ENCODE measurements at regions of chr17 and their contacts with region 1.

Region 1: GRCh38 chr17:80575057-80575875 is 30.6 kb downstream of the RPTOR start:
- DNase-seq: no peak
- H3K4me3 ChIP-seq: no peak overlapping the region
- H3K27ac ChIP-seq: no peak overlapping the region
- H3K4me1 ChIP-seq: peaks cover 0 to 8% (median 2%) of the 10 kb centered on the region in 4 donors
- H3K27me3 ChIP-seq: no peaks in the 10 kb centered on the region
- CTCF ChIP-seq: peak; percentile 97 to 98 (median 98)
- EP300 ChIP-seq: no peak
- POLR2A ChIP-seq: peak; percentile 1

Region 2: DNA sequence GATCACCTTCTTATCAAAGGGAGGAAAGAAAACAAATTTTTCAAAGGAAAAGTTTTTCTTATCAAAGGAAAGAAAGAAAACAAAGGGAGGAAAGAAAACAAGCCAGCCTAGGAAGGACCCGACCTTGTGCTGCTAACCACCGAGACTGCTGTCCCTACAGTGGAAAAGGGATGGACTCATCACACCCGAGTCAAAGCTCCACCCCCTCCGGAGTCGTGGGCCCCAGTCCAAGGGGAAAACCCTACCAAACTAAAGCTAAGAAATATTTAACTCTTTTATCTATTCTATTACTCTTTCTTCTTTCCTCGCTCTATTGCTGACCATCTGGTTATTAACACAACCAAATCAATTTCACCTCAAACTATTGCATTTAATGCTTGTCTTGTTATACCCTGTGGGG is 166.4 kb before region 1 on chr17:
- intact Hi-C with region 1: no loop called
- DNase-seq: no peak
- H3K4me3 ChIP-seq: no peak overlapping the region
- H3K27ac ChIP-seq: no peak overlapping the region
- H3K4me1 ChIP-seq: peaks cover 3 to 11% (median 6%) of the 10 kb centered on the region in 4 donors
- H3K27me3 ChIP-seq: no peaks in the 10 kb centered on the region
- CTCF ChIP-seq: no peak
- EP300 ChIP-seq: no peak
- POLR2A ChIP-seq: no peak

Region 3: GRCh38 chr17:80426681-80427326 is 148.5 kb before region 1 on chr17:
- intact Hi-C with region 1: loop called (anchors 1 kb)
- DNase-seq: no peak
- H3K4me3 ChIP-seq: no peak overlapping the region
- H3K27ac ChIP-seq: no peak overlapping the region
- H3K4me1 ChIP-seq: peaks cover 8 to 22% (median 9%) of the 10 kb centered on the region in 4 donors
- H3K27me3 ChIP-seq: no peaks in the 10 kb centered on the region
- CTCF ChIP-seq: peak in 2 of 3 experiments; percentile 97
- EP300 ChIP-seq: no peak
- POLR2A ChIP-seq: no peak

Region 4: GRCh38 chr17:80599546-80600305 is 24.5 kb after region 1 on chr17:
- intact Hi-C with region 1: no loop called
- DNase-seq: no peak
- H3K4me3 ChIP-seq: no peak overlapping the region
- H3K27ac ChIP-seq: no peak overlapping the region
- H3K4me1 ChIP-seq: peaks cover 8 to 19% (median 18%) of the 10 kb centered on the region in 4 donors
- H3K27me3 ChIP-seq: no peaks in the 10 kb centered on the region
- CTCF ChIP-seq: no peak
- EP300 ChIP-seq: no peak
- POLR2A ChIP-seq: no peak